SK-N-SH (cell line): ENCODE measurements at regions of chr3 and their contacts with region 1.

Region 1: GRCh38 chr3:10738688-10739372 is 77.2 kb upstream of the SLC6A11 start:
- DNase-seq: peak; percentile 81
- H3K4me3 ChIP-seq: peak overlapping the region; percentile 45 to 59; a peak in 3 of 4 replicates
- H3K27ac ChIP-seq: no peak overlapping the region
- H3K4me1 ChIP-seq: peaks cover 0 to 5% of the 10 kb centered on the region in 2 experiments; a peak in 1 of 4 replicates
- H3K27me3 ChIP-seq: no peaks in the 10 kb centered on the region
- CTCF ChIP-seq: peak; percentile 84
- EP300 ChIP-seq: no peak
- RAD21 ChIP-seq: peak; percentile 71

Region 2: GRCh38 chr3:10344147-10344943 is 394.5 kb before region 1 on chr3:
- CTCF ChIA-PET with region 1: interaction called, 166 read pairs
- POLR2A ChIA-PET with region 1: no interaction called
- DNase-seq: peak; percentile 86
- H3K4me3 ChIP-seq: no peak overlapping the region; a peak in 1 of 4 replicates
- H3K27ac ChIP-seq: no peak overlapping the region
- H3K4me1 ChIP-seq: peaks cover 0 to 3% of the 10 kb centered on the region in 2 experiments; a peak in 1 of 4 replicates
- H3K27me3 ChIP-seq: no peaks in the 10 kb centered on the region
- CTCF ChIP-seq: peak; percentile 96
- EP300 ChIP-seq: no peak
- RAD21 ChIP-seq: peak; percentile 84

Region 3: DNA sequence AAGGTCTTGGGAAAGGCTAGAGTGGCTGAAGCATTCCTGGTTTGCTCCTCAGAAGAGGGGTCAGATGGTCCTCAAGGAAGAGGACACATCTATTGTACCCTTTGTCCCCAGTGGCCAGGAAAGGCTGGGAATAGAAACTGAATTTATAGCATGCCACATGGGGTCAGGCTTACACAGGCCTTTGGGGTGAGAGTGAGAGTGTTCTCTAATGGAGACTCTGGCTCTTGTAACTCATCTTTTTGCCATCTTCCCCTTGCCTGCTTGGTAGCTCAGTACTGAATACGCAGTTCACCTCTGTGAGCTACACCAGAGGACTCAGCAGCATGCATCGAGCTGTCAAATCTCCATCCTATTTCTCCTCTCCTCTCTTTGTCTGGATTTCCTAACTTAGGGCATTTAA is 321.0 kb before region 1 on chr3:
- CTCF ChIA-PET with region 1: interaction called, 133 read pairs
- POLR2A ChIA-PET with region 1: no interaction called
- DNase-seq: peak; percentile 78
- H3K4me3 ChIP-seq: no peak overlapping the region
- H3K27ac ChIP-seq: no peak overlapping the region
- H3K4me1 ChIP-seq: no peaks in the 10 kb centered on the region
- H3K27me3 ChIP-seq: no peaks in the 10 kb centered on the region; the same call in 1 of the 2 replicates
- CTCF ChIP-seq: peak; percentile 32
- EP300 ChIP-seq: no peak
- RAD21 ChIP-seq: peak; percentile 91

Region 4: GRCh38 chr3:10471054-10471688 is 267.7 kb before region 1 on chr3:
- CTCF ChIA-PET with region 1: interaction called, 12 read pairs
- POLR2A ChIA-PET with region 1: no interaction called
- DNase-seq: no peak
- H3K4me3 ChIP-seq: no peak overlapping the region
- H3K27ac ChIP-seq: no peak overlapping the region
- H3K4me1 ChIP-seq: peaks cover 0 to 30% of the 10 kb centered on the region in 2 experiments; a peak in 2 of 4 replicates
- H3K27me3 ChIP-seq: peaks cover under 1% of the 10 kb centered on the region; the same call in 1 of the 2 replicates
- CTCF ChIP-seq: no peak
- EP300 ChIP-seq: no peak
- RAD21 ChIP-seq: no peak

Region 5: GRCh38 chr3:10665592-10665991 is 73.2 kb before region 1 on chr3:
- CTCF ChIA-PET with region 1: interaction called, 12 read pairs
- POLR2A ChIA-PET with region 1: no interaction called
- DNase-seq: no peak
- H3K4me3 ChIP-seq: no peak overlapping the region
- H3K27ac ChIP-seq: no peak overlapping the region
- H3K4me1 ChIP-seq: no peaks in the 10 kb centered on the region; a peak in 1 of 4 replicates
- H3K27me3 ChIP-seq: no peaks in the 10 kb centered on the region
- CTCF ChIP-seq: no peak
- EP300 ChIP-seq: no peak
- RAD21 ChIP-seq: no peak

Region 6: GRCh38 chr3:10709110-10709781 is 29.6 kb before region 1 on chr3:
- CTCF ChIA-PET with region 1: interaction called, 174 read pairs
- POLR2A ChIA-PET with region 1: no interaction called
- DNase-seq: peak; percentile 72
- H3K4me3 ChIP-seq: no peak overlapping the region
- H3K27ac ChIP-seq: no peak overlapping the region
- H3K4me1 ChIP-seq: peaks cover 0 to 6% of the 10 kb centered on the region in 2 experiments; a peak in 1 of 4 replicates
- H3K27me3 ChIP-seq: peaks cover 18% of the 10 kb centered on the region; the same call in 1 of the 2 replicates
- CTCF ChIP-seq: no peak
- EP300 ChIP-seq: no peak
- RAD21 ChIP-seq: peak; percentile 62

Region 7: GRCh38 chr3:10772271-10773161 is 33.7 kb after region 1 on chr3:
- CTCF ChIA-PET with region 1: interaction called, 12 read pairs
- POLR2A ChIA-PET with region 1: no interaction called
- DNase-seq: peak; percentile 58
- H3K4me3 ChIP-seq: no peak overlapping the region
- H3K27ac ChIP-seq: no peak overlapping the region
- H3K4me1 ChIP-seq: peaks cover 0 to 3% of the 10 kb centered on the region in 2 experiments; a peak in 1 of 4 replicates
- H3K27me3 ChIP-seq: no peaks in the 10 kb centered on the region
- CTCF ChIP-seq: 0 out of 2 replicates have a peak, but pooled peaks have one; percentile 8
- EP300 ChIP-seq: no peak
- RAD21 ChIP-seq: no peak